Left ventricle myocardium superior (tissue), 1 donor: ENCODE measurements at regions of chr9 and their contacts with region 1.

Region 1: DNA sequence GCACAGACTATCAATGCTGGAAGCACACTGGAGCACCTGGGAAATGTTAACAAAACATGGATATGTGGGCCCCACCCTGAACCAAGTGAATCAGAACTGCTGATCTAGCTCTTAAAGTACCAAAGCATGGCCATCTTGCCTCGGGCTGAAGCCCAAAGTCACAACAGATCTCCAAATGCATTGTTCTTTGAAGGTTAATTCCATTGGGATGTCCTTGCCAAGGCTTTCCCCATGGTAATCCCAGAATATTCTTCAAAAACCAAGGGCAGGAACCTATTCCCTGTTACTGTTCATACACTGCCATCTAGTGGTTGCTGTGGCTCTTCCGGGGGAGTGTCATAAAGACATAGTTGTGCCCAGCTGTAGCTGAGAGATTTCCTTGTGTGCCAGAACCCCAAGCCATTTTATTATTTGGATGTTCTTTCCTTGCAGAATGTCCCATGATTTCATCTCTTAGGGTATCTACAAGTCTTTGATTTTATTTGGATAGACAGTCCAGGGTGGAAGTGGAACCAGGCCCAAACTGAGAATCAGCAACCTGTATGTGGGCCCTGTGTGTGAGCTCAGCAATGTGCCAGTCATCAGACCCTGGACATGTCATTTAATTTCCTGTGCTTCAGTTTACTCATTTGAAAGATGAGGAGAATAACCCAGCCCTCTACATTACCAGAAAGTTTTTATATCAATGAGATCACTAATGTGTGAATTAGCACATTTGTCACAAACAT is 290.0 kb downstream of the ACTL7B start:
- DNase-seq: peak; percentile 35
- ATAC-seq: peak; percentile 94

Region 2: DNA sequence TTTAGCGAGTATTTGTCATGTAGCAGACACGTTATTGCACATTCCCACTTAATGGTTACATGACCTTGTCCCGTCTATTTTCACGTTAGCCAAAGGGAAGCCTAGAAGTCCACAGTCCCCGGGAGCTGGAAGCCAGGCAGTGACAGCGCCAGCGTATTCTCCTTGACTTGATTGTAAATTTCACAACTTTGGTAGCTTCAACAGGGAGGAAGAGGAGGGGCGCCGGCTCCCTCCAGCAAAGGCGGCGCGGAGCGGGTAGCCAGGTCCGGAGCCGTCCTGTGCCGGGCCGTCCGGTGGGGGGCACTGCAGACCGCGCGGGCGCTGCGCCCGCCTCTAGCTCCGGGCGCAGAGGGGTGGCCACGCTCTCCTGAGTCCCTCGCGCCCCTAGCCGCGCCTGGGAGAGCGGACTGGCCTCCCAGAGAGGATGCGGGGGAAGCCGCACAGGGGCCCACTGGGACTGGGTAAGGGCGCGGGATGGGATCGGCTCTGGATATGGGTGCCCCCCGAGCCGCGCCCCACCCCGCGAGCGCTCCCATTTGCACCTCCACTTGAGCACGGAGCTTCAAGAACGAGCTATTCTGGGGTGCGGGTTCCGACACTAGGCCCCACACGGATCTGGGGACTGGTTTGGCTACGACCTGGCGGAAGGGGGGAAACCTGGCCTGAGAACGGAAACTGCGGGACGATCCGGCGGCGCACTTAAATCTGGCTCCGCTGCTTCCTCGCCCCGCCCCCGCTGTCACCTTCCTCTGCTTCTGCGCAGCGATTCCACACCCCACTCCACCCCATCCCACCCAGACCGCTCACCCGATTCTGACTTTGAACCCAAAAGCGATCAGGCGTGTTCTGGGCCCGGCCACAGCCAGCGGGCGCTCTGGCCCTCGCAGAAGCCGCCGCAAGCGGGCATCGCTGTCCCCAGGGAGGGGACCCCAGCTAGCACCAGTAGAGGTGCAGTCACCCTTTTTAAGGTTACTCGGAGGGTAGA is 1100.1 kb before region 1 on chr9:
- intact Hi-C with region 1: loop called (anchors 10 kb)
- DNase-seq: peak; percentile 84
- ATAC-seq: peak; percentile 100

Region 3: GRCh38 chr9:107484117-107484723 is 1081.6 kb before region 1 on chr9:
- intact Hi-C with region 1: loop called (anchors 5 kb)
- DNase-seq: no peak
- ATAC-seq: peak; percentile 50